ENCODE measurements at regions of chr11 and their contacts with region 1.

Region 1: DNA sequence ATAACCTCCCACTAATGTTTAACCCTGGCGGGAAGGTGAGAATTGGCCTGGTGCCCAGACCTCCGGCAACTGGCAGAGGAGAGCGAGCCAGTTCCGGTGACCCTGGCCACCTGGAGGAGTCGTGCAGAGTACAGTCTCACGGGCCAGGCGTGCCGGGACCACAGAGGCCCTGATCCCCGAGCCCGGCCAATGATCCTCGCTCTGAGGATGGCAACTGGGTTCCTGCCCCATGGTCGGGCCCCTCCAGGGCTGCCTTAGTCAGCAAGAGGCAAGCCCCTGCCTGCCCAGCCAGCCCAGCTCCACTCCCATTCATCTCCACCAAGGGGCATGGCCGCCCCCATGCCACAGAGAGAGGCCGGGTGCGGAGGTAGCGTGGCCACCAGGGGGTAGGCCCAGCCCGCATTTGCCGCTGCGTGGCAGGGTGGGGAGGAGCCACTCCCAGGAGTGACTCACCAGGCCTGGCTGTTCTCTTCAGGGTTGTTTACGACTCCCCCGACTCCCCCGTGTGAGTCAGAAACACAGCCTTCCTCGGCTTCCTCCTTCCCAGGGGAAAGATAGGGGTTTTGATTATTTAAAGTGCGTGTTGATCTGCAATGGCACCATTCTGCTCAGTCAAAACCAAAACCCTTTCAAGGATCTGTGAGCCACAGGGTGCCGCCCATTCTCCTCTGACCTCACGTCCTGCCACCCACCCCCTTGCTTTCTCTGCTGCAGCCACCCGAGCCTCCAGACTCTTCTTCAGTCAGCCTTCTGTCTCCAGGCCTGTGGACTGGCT is at the start of gene SLC25A45:
- DNase-seq: peak; percentile 92 to 96 (median 95)
- ATAC-seq: peak; percentile 90 to 95 (median 92)
- H3K4me3 ChIP-seq: peak within 1 kb of the TSS; percentile 6 to 59 (median 50)
- H3K27ac ChIP-seq: peak within 1 kb of the TSS; percentile 90 to 99 (median 96)
- H3K4me1 ChIP-seq: peaks cover 12 to 71% (median 41%) of the 10 kb centered on the region in 12 donors
- H3K27me3 ChIP-seq: no peaks in the 10 kb centered on the region
- CTCF ChIP-seq: peak; percentile 80 to 97 (median 85)
- POLR2A ChIP-seq: peak in 1 of 2 donors; percentile 80
- total RNA-seq, gene SLC25A45: 3.8 to 11.6 (median 6.6) TPM

Region 2: GRCh38 chr11:65471410-65471762 is 89.2 kb after region 1 on chr11:
- intact Hi-C with region 1: loop called in 4 of 10 experiments (anchors 1 to 5 kb)
- DNase-seq: peak; percentile 83 to 94 (median 86)
- ATAC-seq: peak; percentile 86 to 91 (median 88)
- H3K4me3 ChIP-seq: peak overlapping the region in 11 of 12 donors; percentile 14 to 48 (median 36)
- H3K27ac ChIP-seq: peak overlapping the region; percentile 94 to 100 (median 98)
- H3K4me1 ChIP-seq: peaks cover 13 to 48% (median 35%) of the 10 kb centered on the region in 12 donors
- H3K27me3 ChIP-seq: no peaks in the 10 kb centered on the region
- CTCF ChIP-seq: peak; percentile 55 to 81 (median 70)
- POLR2A ChIP-seq: no peak

Region 3: DNA sequence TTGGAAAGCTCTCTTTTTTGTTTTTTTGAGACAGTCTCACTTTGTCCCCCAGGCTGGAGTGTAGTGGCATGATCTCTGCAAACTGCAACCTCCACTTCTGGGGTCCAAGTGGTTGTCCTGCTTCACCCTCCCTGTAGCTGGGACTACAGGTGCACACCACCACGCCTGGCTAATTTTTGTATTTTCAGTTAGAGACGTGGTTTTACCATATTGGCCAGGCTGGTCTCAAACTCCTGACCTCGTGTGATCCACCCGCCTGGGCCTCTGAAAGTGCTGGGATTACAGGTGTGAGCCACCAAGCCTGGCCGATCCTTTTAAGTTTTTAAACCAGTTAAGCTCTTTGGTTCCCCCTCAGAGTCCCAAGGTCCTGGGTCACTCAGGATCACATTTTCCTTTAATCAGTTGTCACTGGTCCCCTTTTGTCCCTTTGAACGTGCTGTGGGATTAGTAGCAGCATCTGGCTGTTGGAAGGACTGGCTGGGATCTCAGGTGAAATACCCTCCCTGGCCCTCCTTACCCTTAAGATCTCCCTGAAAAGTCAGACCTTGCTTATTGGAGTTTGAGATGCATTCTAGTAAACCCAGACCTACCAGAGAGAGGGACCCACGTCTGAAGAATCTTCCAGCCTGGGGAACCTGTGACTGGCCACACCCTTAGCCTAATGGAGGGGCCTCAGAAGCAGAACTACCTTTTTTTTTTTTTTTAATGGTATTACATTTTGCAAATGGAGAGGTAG is 124.7 kb after region 1 on chr11:
- intact Hi-C with region 1: loop called in 9 of 10 experiments (anchors 1 to 5 kb)
- DNase-seq: peak in 3 of 5 donors; percentile 35 to 39 (median 38)
- ATAC-seq: peak; percentile 21 to 50 (median 43)
- H3K4me3 ChIP-seq: peak overlapping the region in 9 of 12 donors; percentile 70 to 90 (median 82)
- H3K27ac ChIP-seq: peak overlapping the region; percentile 65 to 100 (median 98)
- H3K4me1 ChIP-seq: peaks cover 0 to 57% (median 26%) of the 10 kb centered on the region in 12 donors
- H3K27me3 ChIP-seq: no peaks in the 10 kb centered on the region
- CTCF ChIP-seq: no peak
- POLR2A ChIP-seq: peak in 1 of 2 donors; percentile 35

Region 4: GRCh38 chr11:65516135-65516935 is 134.1 kb after region 1 on chr11:
- intact Hi-C with region 1: loop called in 6 of 10 experiments (anchors 5 kb)
- DNase-seq: peak in 1 of 5 donors; percentile 5
- ATAC-seq: peak in 1 of 4 donors; percentile 4
- H3K4me3 ChIP-seq: no peak overlapping the region
- H3K27ac ChIP-seq: no peak overlapping the region
- H3K4me1 ChIP-seq: no peaks in the 10 kb centered on the region
- H3K27me3 ChIP-seq: no peaks in the 10 kb centered on the region
- CTCF ChIP-seq: no peak
- POLR2A ChIP-seq: no peak

Region 5: DNA sequence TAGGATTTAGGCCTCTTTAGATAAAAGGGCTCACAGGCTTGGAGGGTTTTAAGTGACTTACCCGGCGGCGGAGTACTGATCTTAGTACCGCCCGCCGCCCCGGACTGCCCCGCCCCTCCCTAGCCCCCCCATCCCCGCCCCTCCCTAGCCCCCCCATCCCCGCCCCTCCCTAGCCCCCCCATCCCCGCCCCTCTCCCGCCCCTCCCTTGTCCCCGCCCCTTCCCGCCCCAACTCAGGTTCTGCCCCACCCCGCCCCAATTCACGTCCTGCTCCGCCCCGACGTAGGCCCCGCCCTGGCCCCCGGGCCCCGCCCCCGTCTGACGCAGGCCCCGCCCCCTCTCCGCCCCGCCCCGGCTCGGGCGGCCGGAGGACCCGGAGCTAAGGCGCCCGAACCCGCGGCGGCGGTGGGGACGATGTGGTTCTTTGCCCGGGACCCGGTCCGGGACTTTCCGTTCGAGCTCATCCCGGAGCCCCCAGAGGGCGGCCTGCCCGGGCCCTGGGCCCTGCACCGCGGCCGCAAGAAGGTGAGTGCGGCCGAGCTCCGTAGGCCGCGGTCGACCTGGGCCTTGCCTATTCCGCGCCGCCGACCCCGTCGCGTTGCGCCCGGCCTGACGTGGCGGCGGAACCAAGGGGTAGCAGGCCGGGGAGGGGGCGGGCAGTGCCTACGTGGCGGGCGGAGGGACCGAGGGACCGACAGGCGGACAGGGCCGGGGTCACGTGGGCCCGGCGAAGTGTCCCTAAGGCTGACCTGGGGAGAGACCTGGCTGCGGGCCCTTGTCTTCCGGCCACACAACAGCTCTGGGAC is 142.7 kb after region 1 on chr11 and contains the start of gene SCYL1:
- intact Hi-C with region 1: loop called in 1 of 10 experiments (anchors 5 kb)
- DNase-seq: peak; percentile 83 to 93 (median 87)
- ATAC-seq: peak; percentile 65 to 94 (median 90)
- H3K4me3 ChIP-seq: peak within 1 kb of the TSS; percentile 82 to 100 (median 99)
- H3K27ac ChIP-seq: peak within 1 kb of the TSS; percentile 69 to 97 (median 93)
- H3K4me1 ChIP-seq: peaks cover 0 to 36% (median 20%) of the 10 kb centered on the region in 12 donors
- H3K27me3 ChIP-seq: no peaks in the 10 kb centered on the region
- CTCF ChIP-seq: peak in 1 of 12 donors; percentile 4
- POLR2A ChIP-seq: peak; percentile 29 to 75
- total RNA-seq, gene SCYL1: 51.6 to 135 (median 62.2) TPM

Region 6: GRCh38 chr11:65593518-65594298 is 211.5 kb after region 1 on chr11:
- intact Hi-C with region 1: loop called in 1 of 10 experiments (anchors 10 kb)
- DNase-seq: peak in 2 of 5 donors; percentile 63 to 71
- ATAC-seq: peak in 3 of 4 donors; percentile 23 to 47 (median 45)
- H3K4me3 ChIP-seq: no peak overlapping the region
- H3K27ac ChIP-seq: peak overlapping the region in 5 of 12 donors; percentile 3 to 54 (median 20)
- H3K4me1 ChIP-seq: peaks cover 0 to 51% (median 33%) of the 10 kb centered on the region in 12 donors
- H3K27me3 ChIP-seq: no peaks in the 10 kb centered on the region
- CTCF ChIP-seq: peak; percentile 56 to 76 (median 66)
- POLR2A ChIP-seq: no peak

Region 7: DNA sequence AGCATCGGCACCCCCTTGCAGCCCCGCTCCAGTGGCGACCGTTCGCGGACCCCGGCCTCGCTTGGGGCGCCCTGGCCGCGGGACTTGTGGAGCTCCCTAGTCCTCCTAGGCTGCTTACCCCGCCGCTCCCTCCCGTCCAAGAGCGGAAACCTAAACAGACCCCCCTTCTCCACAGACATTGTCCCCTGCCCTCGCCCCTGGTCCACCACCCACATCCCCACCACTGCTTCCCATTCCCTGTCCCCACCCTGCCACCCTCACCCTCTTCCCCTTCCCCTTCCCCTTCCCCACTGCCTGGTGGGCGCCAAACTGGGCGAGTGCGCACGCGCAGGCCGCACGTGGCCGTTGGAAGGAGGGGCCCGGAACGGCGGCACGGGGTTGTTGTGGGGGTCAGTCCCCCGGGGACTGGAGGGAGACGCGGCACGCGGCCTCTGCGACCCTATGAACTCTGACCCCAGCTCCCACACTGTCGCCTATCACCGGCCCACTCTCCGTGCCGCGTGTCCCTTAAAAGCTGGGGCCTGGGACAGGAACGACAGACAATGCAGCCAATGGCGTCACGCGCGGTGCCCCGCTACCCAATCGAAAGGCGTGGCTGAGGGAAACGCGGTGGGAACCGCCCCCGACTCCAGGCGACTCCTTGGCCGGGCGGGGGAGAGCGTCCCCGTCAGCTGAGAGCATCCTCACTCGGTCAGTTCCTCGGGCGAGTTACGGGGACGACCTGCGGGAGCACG is 451.2 kb after region 1 on chr11 and contains the start of gene SNX32:
- intact Hi-C with region 1: no loop called
- DNase-seq: peak; percentile 95 to 97 (median 96)
- ATAC-seq: peak; percentile 100
- H3K4me3 ChIP-seq: peak within 1 kb of the TSS; percentile 19 to 72 (median 62)
- H3K27ac ChIP-seq: peak within 1 kb of the TSS in 5 of 12 donors; percentile 19 to 56 (median 44)
- H3K4me1 ChIP-seq: peaks cover 0 to 15% (median 7%) of the 10 kb centered on the region in 12 donors
- H3K27me3 ChIP-seq: no peaks in the 10 kb centered on the region
- CTCF ChIP-seq: no peak
- POLR2A ChIP-seq: no peak
- total RNA-seq, gene SNX32: 0.13 to 0.52 (median 0.37) TPM in 4 of 9 donors, not detected in the others